Activated CD4-positive, alpha-beta T cell treated with anti-CD3 and anti-CD28 coated beads for 36 hours (primary cell): ENCODE measurements at regions of chr20 and their contacts with region 1.

Region 1: DNA sequence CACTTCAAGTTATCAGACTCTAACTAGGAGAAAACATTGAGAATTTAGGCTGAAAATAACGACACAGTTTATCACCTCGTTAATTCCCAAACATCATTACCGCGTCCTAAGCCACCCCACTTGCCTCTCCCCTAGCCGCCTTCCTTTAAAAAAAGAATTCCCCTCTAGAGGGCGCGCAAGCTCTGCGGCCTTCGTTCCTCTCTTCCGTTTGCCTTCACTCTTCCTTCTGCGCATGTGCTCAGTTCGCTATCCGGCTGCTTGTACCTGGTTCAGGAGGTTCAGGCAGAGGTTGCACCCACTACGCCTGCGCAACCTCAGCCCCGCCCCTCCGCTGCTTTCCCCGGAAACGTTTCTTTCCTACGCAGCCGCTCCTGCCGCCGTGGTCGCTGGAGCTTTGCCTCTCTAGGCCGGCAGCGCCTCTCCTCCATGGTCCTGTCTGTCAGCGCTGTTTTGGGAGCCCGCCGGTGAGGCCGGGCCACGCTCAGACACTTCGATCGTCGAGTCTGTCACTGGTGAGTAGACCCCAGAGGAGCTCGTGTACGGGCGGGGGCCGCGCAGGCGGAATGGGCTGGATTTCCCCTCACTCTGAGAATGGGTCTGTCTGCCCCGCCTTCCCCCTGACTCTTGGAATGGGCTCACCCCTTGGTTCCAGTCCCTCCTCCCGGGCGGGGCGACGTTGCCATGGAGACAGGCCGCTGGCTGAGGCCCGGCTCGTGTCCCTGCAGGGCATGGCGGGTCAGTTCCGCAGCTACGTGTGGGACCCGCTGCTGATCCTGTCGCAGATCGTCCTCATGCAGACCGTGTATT is at the start of gene SYS1:
- DNase-seq: peak; percentile 99
- ATAC-seq: peak; percentile 93
- H3K4me3 Mint-ChIP-seq: peak within 1 kb of the TSS; percentile 95
- H3K27ac Mint-ChIP-seq: peak within 1 kb of the TSS; percentile 98
- H3K4me1 Mint-ChIP-seq: peaks cover 43% of the 10 kb centered on the region
- H3K27me3 Mint-ChIP-seq: no peaks in the 10 kb centered on the region
- total RNA-seq, gene SYS1: 16.1 to 26.1 TPM

Region 2: GRCh38 chr20:44885392-44886265 is 477.4 kb before region 1 on chr20 and contains the start of gene YWHAB:
- CTCF ChIA-PET with region 1: no interaction called
- POLR2A ChIA-PET with region 1: no interaction called
- intact Hi-C with region 1: loop called in 1 of 2 experiments (anchors 1 kb)
- DNase-seq: peak; percentile 99
- ATAC-seq: peak; percentile 96
- H3K4me3 Mint-ChIP-seq: peak within 1 kb of the TSS; percentile 94
- H3K27ac Mint-ChIP-seq: peak within 1 kb of the TSS; percentile 95
- H3K4me1 Mint-ChIP-seq: peaks cover 58% of the 10 kb centered on the region
- H3K27me3 Mint-ChIP-seq: no peaks in the 10 kb centered on the region
- total RNA-seq, gene YWHAB: 273 to 326 TPM

Region 3: DNA sequence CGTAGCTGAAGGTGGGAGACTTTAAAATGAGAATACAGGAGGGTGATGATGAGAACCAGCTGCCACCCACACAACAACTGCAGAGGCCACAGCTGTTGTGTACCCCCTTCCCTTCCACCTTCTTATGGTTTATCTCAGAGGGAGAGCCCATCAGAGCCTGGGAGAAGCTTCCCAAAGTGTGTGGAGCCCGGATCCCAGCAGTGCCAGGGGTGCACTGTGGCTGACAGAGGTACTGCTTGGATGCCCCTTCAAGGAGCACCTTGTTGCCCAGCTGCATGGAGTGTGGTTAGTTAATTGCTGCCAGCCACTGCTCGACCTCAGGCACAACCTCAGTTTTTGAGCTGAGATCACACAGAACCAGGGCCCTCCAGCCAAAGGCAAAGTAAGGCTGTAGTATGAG is 175.3 kb before region 1 on chr20:
- CTCF ChIA-PET with region 1: no interaction called
- POLR2A ChIA-PET with region 1: no interaction called
- intact Hi-C with region 1: no loop called
- DNase-seq: no peak
- ATAC-seq: no peak
- H3K4me3 Mint-ChIP-seq: no peak overlapping the region
- H3K27ac Mint-ChIP-seq: no peak overlapping the region
- H3K4me1 Mint-ChIP-seq: no peaks in the 10 kb centered on the region
- H3K27me3 Mint-ChIP-seq: peaks cover 2% of the 10 kb centered on the region

Region 4: GRCh38 chr20:45347936-45348778 is 14.8 kb before region 1 on chr20 and contains the start of gene SDC4:
- CTCF ChIA-PET with region 1: interaction called, 45 read pairs
- POLR2A ChIA-PET with region 1: interaction called, 7 read pairs
- intact Hi-C with region 1: loop called (anchors 1 to 2 kb)
- DNase-seq: peak; percentile 79
- ATAC-seq: peak; percentile 81
- H3K4me3 Mint-ChIP-seq: peak within 1 kb of the TSS; percentile 82
- H3K27ac Mint-ChIP-seq: peak within 1 kb of the TSS; percentile 81
- H3K4me1 Mint-ChIP-seq: peaks cover 44% of the 10 kb centered on the region
- H3K27me3 Mint-ChIP-seq: peaks cover 3% of the 10 kb centered on the region
- total RNA-seq, gene SDC4: 24.0 to 31.0 TPM

Region 5: GRCh38 chr20:45415774-45416637 is 53.0 kb after region 1 on chr20 and contains the start of gene PIGT:
- CTCF ChIA-PET with region 1: interaction called, 17 read pairs
- POLR2A ChIA-PET with region 1: interaction called, 5 read pairs
- intact Hi-C with region 1: loop called (anchors 1 to 2 kb)
- DNase-seq: peak; percentile 93
- ATAC-seq: peak; percentile 93
- H3K4me3 Mint-ChIP-seq: peak within 1 kb of the TSS; percentile 94
- H3K27ac Mint-ChIP-seq: peak within 1 kb of the TSS; percentile 97
- H3K4me1 Mint-ChIP-seq: peaks cover 44% of the 10 kb centered on the region
- H3K27me3 Mint-ChIP-seq: no peaks in the 10 kb centered on the region
- total RNA-seq, gene PIGT: 44.0 to 65.7 TPM

Region 6: GRCh38 chr20:45444050-45444449 is 81.0 kb after region 1 on chr20:
- CTCF ChIA-PET with region 1: interaction called, 189 read pairs
- POLR2A ChIA-PET with region 1: interaction called, 3 read pairs
- intact Hi-C with region 1: no loop called
- DNase-seq: peak; percentile 35
- ATAC-seq: peak; percentile 26
- H3K4me3 Mint-ChIP-seq: no peak overlapping the region
- H3K27ac Mint-ChIP-seq: no peak overlapping the region
- H3K4me1 Mint-ChIP-seq: peaks cover 16% of the 10 kb centered on the region
- H3K27me3 Mint-ChIP-seq: peaks cover 8% of the 10 kb centered on the region

Region 7: DNA sequence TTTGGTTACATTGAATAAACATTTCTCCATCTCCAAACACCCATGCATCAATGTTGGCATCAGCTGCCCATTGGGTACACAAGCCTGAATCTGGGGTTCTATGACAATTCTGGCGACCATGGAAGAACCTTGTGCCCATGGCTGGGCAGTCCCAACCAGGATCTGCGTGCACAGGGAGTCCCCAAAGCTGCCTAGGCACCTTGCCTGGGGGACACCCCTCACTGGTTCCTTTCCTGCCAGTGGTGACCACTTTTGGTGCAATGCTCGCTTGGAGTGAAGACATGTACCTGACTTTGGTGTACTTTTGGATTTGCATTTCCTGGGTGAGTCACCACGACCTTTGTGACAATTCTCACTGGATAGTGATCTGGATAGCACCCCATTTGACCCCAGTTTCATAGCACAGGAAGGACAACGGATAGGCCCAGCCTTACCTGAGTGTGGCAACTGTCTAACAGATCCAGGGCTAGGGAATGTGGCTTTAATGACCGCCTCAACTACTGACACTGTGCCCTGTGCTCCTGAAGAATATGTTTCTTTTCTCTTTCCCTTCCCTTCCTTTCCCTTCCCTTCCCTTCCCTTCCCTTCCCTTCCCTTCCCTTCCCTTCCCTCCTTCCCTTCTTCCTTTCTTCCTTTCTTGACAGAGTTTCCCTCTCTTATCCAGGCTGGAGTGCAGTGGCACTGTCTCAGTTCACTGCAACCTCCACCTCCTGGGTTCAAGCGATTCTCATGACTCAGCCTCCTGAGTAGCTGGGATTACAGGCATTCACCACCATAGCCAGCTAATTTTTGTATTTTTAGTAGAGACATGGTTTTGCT is 145.3 kb after region 1 on chr20:
- CTCF ChIA-PET with region 1: no interaction called
- POLR2A ChIA-PET with region 1: no interaction called
- intact Hi-C with region 1: no loop called
- DNase-seq: peak; percentile 11
- ATAC-seq: peak; percentile 23
- H3K4me3 Mint-ChIP-seq: no peak overlapping the region
- H3K27ac Mint-ChIP-seq: no peak overlapping the region
- H3K4me1 Mint-ChIP-seq: peaks cover 12% of the 10 kb centered on the region
- H3K27me3 Mint-ChIP-seq: peaks cover 33% of the 10 kb centered on the region

Region 8: GRCh38 chr20:45792332-45792686 is 429.3 kb after region 1 on chr20:
- CTCF ChIA-PET with region 1: no interaction called
- POLR2A ChIA-PET with region 1: no interaction called
- intact Hi-C with region 1: loop called in 1 of 2 experiments (anchors 5 kb)
- DNase-seq: peak; percentile 12
- ATAC-seq: peak; percentile 2
- H3K4me3 Mint-ChIP-seq: peak overlapping the region; percentile 81
- H3K27ac Mint-ChIP-seq: peak overlapping the region; percentile 80
- H3K4me1 Mint-ChIP-seq: peaks cover 13% of the 10 kb centered on the region
- H3K27me3 Mint-ChIP-seq: no peaks in the 10 kb centered on the region

Region 9: DNA sequence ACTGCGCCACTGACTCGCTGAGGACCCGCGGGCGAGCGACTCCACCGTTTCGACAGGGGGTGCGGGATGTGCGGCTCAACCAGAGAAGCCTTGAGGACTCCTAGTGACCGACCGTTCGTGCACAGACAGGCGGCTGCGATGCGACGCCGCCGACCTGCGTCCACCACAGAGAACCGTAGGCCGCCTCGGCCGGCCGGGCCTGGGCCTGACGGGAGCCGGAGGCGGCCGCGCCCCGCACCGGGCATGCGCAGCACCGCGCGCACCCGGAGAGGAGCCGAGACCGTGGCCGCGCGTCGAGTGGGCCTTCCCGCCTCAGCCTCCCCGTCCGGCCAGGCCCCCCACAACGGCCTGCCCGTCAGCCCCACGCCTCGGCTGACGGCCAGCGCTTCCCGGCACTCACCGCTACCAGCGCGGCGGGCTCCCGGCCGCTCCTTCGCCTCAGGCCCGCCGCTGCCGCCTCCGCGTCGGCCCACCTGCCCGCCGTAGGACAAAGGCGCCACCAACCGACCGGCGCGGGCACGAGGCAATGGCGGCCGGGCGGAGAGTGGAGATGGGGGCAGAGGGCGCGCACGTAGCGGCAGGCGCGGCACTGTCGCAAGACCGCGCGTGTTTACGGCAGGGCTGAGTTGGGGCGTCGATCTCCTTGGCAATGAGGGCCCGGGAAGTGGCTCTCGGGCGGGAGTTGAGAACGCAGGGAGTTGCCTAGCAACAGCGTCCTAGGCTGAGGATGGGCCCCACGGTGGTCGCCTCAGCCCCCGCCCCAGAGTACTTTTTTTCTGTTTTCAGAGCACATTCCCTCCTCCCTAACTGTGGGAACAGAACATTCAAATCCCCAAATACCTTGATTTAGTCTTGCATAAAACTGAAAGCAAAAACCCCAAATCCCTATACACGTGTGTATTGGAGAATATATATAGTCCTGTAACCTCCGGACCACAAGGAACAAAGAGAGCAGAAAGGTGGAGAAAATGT is 726.7 kb after region 1 on chr20 and contains the start of gene NCOA5:
- CTCF ChIA-PET with region 1: no interaction called
- POLR2A ChIA-PET with region 1: no interaction called
- intact Hi-C with region 1: loop called in 1 of 2 experiments (anchors 5 kb)
- DNase-seq: peak; percentile 97
- ATAC-seq: peak; percentile 87
- H3K4me3 Mint-ChIP-seq: peak within 1 kb of the TSS; percentile 86
- H3K27ac Mint-ChIP-seq: peak within 1 kb of the TSS; percentile 88
- H3K4me1 Mint-ChIP-seq: peaks cover 46% of the 10 kb centered on the region
- H3K27me3 Mint-ChIP-seq: no peaks in the 10 kb centered on the region
- total RNA-seq, gene NCOA5: 17.9 to 18.8 TPM

Region 10: DNA sequence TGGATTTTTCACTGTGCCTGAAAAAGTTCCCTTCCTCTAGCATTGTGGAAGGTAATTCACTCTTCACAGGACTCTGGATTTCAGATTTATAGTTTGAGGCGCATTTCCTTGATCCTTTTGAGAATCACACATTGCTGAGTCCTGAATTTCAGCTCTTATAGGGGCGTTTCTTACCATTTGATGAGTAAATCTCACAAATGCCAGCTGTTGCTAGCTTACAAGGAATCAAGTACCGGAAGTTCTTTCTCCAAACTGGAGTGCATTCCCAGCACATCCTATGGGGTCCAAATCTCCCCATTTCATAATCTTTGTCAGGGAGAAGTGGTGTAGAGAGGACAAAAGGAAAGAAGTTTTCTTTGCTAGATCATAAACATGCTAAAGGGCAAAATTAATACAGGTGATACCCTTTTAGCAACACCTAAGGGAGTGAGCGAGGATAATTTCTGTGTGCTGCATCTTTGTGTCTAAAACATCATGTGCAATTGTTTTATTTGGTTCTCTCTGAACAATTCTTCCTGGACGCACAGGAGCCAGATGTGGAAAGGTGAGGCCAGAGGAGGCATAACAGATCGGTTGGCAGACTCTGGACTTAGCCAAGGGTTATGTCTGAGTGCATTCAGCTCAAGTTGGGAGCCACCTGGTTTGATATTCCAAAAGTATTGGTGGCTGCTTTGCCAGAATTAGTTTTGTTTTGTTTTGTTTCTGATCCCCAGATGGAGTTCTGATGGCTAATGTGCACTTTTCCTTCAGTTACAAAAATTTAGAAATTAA is 1494.2 kb after region 1 on chr20:
- CTCF ChIA-PET with region 1: no interaction called
- POLR2A ChIA-PET with region 1: no interaction called
- intact Hi-C with region 1: no loop called
- DNase-seq: no peak
- ATAC-seq: no peak
- H3K4me3 Mint-ChIP-seq: no peak overlapping the region
- H3K27ac Mint-ChIP-seq: no peak overlapping the region
- H3K4me1 Mint-ChIP-seq: no peaks in the 10 kb centered on the region
- H3K27me3 Mint-ChIP-seq: peaks cover 10% of the 10 kb centered on the region